ENCODE measurements at regions of chr6 and their contacts with region 1.

Region 1: GRCh38 chr6:122426597-122426996 is 27.1 kb downstream of the HSF2 start:
- DNase-seq: no peak
- H3K4me3 Mint-ChIP-seq: no peak overlapping the region
- H3K27ac Mint-ChIP-seq: no peak overlapping the region
- H3K4me1 Mint-ChIP-seq: peaks cover 2% of the 10 kb centered on the region
- H3K27me3 Mint-ChIP-seq: no peaks in the 10 kb centered on the region

Region 2: GRCh38 chr6:122381497-122382265 is 44.9 kb before region 1 on chr6:
- CTCF ChIA-PET with region 1: no interaction called
- POLR2A ChIA-PET with region 1: no interaction called
- DNase-seq: peak; percentile 71
- H3K4me3 Mint-ChIP-seq: no peak overlapping the region
- H3K27ac Mint-ChIP-seq: no peak overlapping the region
- H3K4me1 Mint-ChIP-seq: peaks cover 2% of the 10 kb centered on the region
- H3K27me3 Mint-ChIP-seq: peaks cover 6% of the 10 kb centered on the region

Region 3: GRCh38 chr6:122408702-122409458 is 17.7 kb before region 1 on chr6:
- CTCF ChIA-PET with region 1: interaction called, 11 read pairs
- POLR2A ChIA-PET with region 1: no interaction called
- DNase-seq: no peak
- H3K4me3 Mint-ChIP-seq: peak overlapping the region; percentile 69
- H3K27ac Mint-ChIP-seq: peak overlapping the region; percentile 96
- H3K4me1 Mint-ChIP-seq: peaks cover 49% of the 10 kb centered on the region
- H3K27me3 Mint-ChIP-seq: no peaks in the 10 kb centered on the region